ENCODE measurements at regions of chr16 and their contacts with region 1.

Region 1: GRCh38 chr16:69568676-69569075 is 2.9 kb downstream of the NFAT5 start:
- H3K4me3 ChIP-seq: no peak overlapping the region
- H3K27ac ChIP-seq: no peak overlapping the region
- H3K4me1 ChIP-seq: peaks cover 12% of the 10 kb centered on the region
- CTCF ChIP-seq: no peak

Region 2: GRCh38 chr16:69465083-69465721 is 103.5 kb before region 1 on chr16:
- CTCF ChIA-PET with region 1: no interaction called
- POLR2A ChIA-PET with region 1: no interaction called
- H3K4me3 ChIP-seq: no peak overlapping the region
- H3K27ac ChIP-seq: no peak overlapping the region
- H3K4me1 ChIP-seq: peaks cover 18% of the 10 kb centered on the region
- CTCF ChIP-seq: no peak

Region 3: GRCh38 chr16:69535123-69536050 is 33.3 kb before region 1 on chr16:
- CTCF ChIA-PET with region 1: no interaction called
- POLR2A ChIA-PET with region 1: interaction called, 10 read pairs
- H3K4me3 ChIP-seq: no peak overlapping the region
- H3K27ac ChIP-seq: no peak overlapping the region
- H3K4me1 ChIP-seq: no peaks in the 10 kb centered on the region; the same call in 1 of the 2 replicates
- CTCF ChIP-seq: no peak

Region 4: DNA sequence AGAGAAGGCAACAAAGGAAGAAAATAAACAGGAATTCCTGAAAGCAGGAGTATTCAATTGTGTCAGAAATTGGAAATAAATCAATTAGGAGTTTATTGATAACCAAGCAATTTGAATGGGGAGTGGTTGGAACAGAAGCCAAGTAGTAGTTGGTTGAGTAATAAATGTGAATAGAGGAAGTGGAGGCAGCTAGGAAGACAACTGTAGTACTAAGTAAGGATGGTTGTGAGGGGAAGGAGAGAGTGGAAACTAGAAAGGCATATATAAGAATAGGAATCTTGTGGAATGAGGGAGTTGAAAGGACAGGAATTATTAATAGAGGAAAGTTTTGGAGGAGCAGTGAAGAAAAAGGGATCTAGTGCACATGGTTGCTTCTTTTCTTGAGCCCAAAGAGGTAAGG is 31.5 kb after region 1 on chr16:
- CTCF ChIA-PET with region 1: no interaction called
- POLR2A ChIA-PET with region 1: no interaction called
- H3K4me3 ChIP-seq: no peak overlapping the region
- H3K27ac ChIP-seq: no peak overlapping the region
- H3K4me1 ChIP-seq: 0 out of 2 replicates have a peak, but pooled peaks cover 3% of the 10 kb centered on the region
- CTCF ChIP-seq: no peak

Measured in HEK293 (cell line).